Natural killer cell (primary cell): ENCODE measurements at regions of chr1 and their contacts with region 1.

Region 1: GRCh38 chr1:199089393-199090122 is 450.7 kb downstream of the PTPRC start:
- DNase-seq: peak; percentile 36 to 83
- ATAC-seq: peak; percentile 94 to 98 (median 96)
- H3K4me3 ChIP-seq: no peak overlapping the region
- H3K4me3 Mint-ChIP-seq: peak overlapping the region; percentile 68
- H3K27ac ChIP-seq: no peak overlapping the region
- H3K27ac Mint-ChIP-seq: peak overlapping the region; percentile 67 to 70
- H3K4me1 ChIP-seq: no peaks in the 10 kb centered on the region
- H3K4me1 Mint-ChIP-seq: peaks cover 33 to 48% of the 10 kb centered on the region in 2 donors
- H3K27me3 ChIP-seq: no peaks in the 10 kb centered on the region
- H3K27me3 Mint-ChIP-seq: peaks cover 0 to 3% of the 10 kb centered on the region in 2 donors
- CTCF ChIP-seq: no peak

Region 2: DNA sequence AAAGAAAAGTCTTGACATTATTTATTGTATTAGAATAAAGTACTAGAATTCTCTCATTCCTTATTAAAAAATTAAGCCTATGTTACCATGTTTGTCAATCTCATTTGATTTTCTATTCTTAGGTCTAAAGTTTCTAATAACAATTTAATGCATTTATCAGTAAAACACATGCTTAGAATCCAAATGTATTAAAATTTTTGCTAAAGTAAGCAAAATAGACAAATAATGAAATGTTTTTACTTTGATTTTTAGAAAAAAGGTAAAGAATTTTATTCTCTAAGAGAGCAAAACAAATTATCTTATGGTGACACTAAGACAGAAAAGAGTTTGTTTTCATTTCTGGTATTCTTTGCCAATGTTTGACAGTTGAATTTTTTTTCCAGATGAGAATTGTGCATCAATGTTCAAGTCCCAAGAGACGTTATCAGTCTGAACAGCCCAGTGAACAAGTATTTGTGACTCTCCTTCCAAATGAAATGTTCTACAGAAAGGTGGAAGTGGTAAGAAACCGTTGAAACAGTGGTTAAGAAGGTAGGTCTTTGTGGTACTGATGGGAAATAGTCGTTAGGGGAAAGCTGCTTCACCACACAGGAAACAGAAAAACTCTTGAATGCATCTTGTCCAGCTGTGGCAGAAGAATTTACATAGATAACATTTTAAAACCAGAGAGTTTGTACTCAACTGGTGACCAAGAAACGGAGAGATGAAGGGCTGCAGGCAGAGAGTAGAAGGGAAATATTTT is 48.2 kb before region 1 on chr1:
- intact Hi-C with region 1: loop called (anchors 5 kb)
- DNase-seq: peak in 1 of 2 donors; percentile 56
- ATAC-seq: peak; percentile 65 to 94 (median 83)
- H3K4me3 ChIP-seq: no peak overlapping the region
- H3K4me3 Mint-ChIP-seq: peak overlapping the region; percentile 77
- H3K27ac ChIP-seq: no peak overlapping the region
- H3K27ac Mint-ChIP-seq: peak overlapping the region; percentile 27 to 75
- H3K4me1 ChIP-seq: no peaks in the 10 kb centered on the region
- H3K4me1 Mint-ChIP-seq: peaks cover 43% of the 10 kb centered on the region in 2 donors
- H3K27me3 ChIP-seq: no peaks in the 10 kb centered on the region
- H3K27me3 Mint-ChIP-seq: peaks cover 0 to 14% of the 10 kb centered on the region in 2 donors
- CTCF ChIP-seq: no peak

Region 3: GRCh38 chr1:199138061-199138460 is 48.5 kb after region 1 on chr1:
- intact Hi-C with region 1: no loop called
- DNase-seq: no peak
- ATAC-seq: no peak
- H3K4me3 ChIP-seq: no peak overlapping the region
- H3K4me3 Mint-ChIP-seq: no peak overlapping the region
- H3K27ac ChIP-seq: no peak overlapping the region
- H3K27ac Mint-ChIP-seq: no peak overlapping the region
- H3K4me1 ChIP-seq: no peaks in the 10 kb centered on the region
- H3K4me1 Mint-ChIP-seq: peaks cover 0 to 20% of the 10 kb centered on the region in 2 donors
- H3K27me3 ChIP-seq: no peaks in the 10 kb centered on the region
- H3K27me3 Mint-ChIP-seq: peaks cover 0 to 3% of the 10 kb centered on the region in 2 donors
- CTCF ChIP-seq: no peak

Region 4: DNA sequence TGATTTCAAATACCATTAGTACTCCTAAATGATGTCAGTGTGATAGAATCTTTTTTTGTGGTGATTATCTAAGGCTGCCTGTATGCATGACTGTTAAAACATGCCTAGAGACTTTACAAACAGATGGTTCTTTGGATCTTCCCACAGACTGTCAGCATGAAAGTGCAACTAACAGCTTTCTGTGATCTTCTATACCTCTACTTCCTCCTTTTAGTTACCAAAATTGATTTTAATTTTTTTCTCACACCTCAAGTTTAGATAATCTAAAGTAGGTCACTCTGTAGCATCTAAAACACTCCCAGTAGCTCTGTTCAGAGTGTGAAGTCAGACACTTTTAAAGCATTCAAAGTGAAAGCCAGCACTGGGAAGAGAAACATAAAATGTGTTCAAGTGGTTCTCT is 83.8 kb after region 1 on chr1:
- intact Hi-C with region 1: loop called (anchors 5 kb)
- DNase-seq: peak in 1 of 2 donors; percentile 77
- ATAC-seq: peak; percentile 77 to 92 (median 89)
- H3K4me3 ChIP-seq: no peak overlapping the region
- H3K4me3 Mint-ChIP-seq: peak overlapping the region; percentile 49
- H3K27ac ChIP-seq: peak overlapping the region; percentile 90
- H3K27ac Mint-ChIP-seq: peak overlapping the region; percentile 88 to 94
- H3K4me1 ChIP-seq: peaks cover 37% of the 10 kb centered on the region
- H3K4me1 Mint-ChIP-seq: peaks cover 65 to 78% of the 10 kb centered on the region in 2 donors
- H3K27me3 ChIP-seq: no peaks in the 10 kb centered on the region
- H3K27me3 Mint-ChIP-seq: no peaks in the 10 kb centered on the region
- CTCF ChIP-seq: no peak